Breast epithelium (tissue), 4 donors: ENCODE measurements at regions of chr3 and their contacts with region 1.

Region 1: GRCh38 chr3:30544812-30545211 is 61.6 kb upstream of the TGFBR2 start:
- DNase-seq: no peak
- H3K4me3 ChIP-seq: no peak overlapping the region
- H3K27ac ChIP-seq: peak overlapping the region; percentile 37 to 60
- H3K4me1 ChIP-seq: peaks cover 0 to 9% of the 10 kb centered on the region in 2 donors
- H3K27me3 ChIP-seq: no peaks in the 10 kb centered on the region
- CTCF ChIP-seq: no peak
- POLR2A ChIP-seq: no peak

Region 2: DNA sequence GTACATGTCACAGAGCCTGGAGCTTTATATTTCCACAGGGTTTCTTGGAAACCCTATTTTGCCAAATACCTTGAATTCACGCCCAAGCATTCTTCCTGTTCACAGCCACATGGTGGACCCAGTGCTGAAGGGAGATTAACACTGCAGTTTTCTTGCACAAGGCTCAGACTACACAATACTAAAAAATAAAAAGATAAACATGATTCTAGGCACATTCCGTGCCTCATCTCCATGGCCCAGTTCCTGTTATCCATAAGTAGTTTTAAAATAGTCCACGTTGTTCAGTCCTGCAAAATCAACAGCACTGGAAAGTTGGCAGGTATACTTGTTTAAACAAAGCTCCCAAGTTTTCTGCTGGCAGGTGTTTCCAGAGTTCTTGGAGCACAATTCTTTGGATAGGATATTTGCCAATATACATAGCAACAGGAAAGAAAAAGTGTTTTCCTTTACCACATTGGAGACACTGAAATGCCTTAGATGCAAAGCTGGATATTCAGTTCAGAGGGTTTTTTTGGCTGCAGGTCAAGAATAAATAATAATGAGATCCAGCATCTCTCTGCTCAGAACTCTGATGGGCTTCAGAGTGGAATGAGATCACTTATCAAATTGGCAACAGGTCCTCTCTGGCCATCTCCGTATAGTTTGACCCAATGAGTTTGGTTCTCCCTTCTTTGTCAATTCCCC is 26.5 kb before region 1 on chr3:
- intact Hi-C with region 1: loop called (anchors 2 kb)
- DNase-seq: peak in 1 of 2 donors; percentile 76
- H3K4me3 ChIP-seq: no peak overlapping the region
- H3K27ac ChIP-seq: peak overlapping the region; percentile 69 to 83
- H3K4me1 ChIP-seq: peaks cover 0 to 5% of the 10 kb centered on the region in 2 donors
- H3K27me3 ChIP-seq: no peaks in the 10 kb centered on the region
- CTCF ChIP-seq: peak in 2 of 3 donors; percentile 18 to 23
- POLR2A ChIP-seq: no peak